Activated CD8-positive, alpha-beta memory T cell treated with anti-CD3 and anti-CD28 coated beads, Interleukin-2, amount 10 ng/mL, durations not matched to agents 7 days and 5 days (primary cell): ENCODE measurements at regions of chr12 and their contacts with region 1.

Region 1: DNA sequence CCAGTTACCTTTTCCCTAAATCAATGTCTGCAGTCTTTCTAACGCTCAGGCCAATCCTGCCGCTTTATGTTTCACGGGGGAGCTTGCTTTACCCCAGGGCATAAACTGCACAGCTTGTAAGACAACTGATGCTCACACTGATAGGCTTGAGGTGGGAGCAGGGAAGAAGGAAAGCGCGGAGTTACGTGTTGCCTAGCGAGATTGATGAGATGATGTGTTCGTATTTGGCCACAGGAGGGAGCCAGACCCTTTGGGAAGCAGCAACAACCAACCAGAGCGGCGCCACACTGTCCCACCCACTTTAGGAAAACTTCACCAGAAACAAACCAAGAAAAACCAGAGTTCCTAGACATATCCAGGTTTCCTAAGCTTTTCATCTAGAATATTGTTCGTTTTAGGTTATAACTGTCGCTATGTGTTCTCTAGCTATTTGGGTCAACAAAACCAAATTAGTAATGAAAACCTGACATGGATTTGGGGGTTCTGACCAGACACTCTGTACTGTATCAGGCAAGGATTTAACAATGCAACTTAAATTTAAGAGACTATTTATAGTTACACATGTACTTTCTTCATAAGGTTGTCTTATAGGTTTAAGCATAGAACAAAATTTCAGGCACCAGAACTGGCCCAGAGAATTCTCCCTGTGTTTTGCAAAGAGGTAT is 2.4 kb downstream of the IL26 start:
- DNase-seq: peak; percentile 83
- ATAC-seq: peak; percentile 99
- H3K4me3 Mint-ChIP-seq: peak overlapping the region; percentile 39
- H3K27ac Mint-ChIP-seq: peak overlapping the region; percentile 75
- H3K4me1 Mint-ChIP-seq: peaks cover 32% of the 10 kb centered on the region
- H3K27me3 Mint-ChIP-seq: peaks cover 17% of the 10 kb centered on the region

Region 2: DNA sequence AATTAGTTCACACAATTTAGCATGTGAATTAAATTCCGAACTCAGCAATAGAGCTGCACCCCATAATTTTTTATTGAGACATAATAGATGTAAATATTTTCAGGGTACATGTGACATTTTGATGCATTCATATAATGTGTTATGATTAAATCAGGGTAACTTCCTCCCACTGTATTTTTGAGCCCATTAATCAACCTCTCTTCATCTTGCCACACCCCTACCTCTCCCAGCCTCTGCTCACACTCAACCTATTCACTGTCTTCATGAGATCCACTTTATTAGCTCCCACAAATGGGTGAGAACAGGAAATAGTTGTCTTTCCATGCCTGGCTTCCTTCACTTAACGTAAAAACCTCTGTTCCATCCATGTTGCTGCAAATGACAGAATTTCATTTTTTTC is 12.3 kb before region 1 on chr12:
- CTCF ChIA-PET with region 1: interaction called, 13 read pairs
- DNase-seq: no peak
- ATAC-seq: no peak
- H3K4me3 Mint-ChIP-seq: no peak overlapping the region
- H3K27ac Mint-ChIP-seq: no peak overlapping the region
- H3K4me1 Mint-ChIP-seq: peaks cover 15% of the 10 kb centered on the region
- H3K27me3 Mint-ChIP-seq: peaks cover 28% of the 10 kb centered on the region

Region 3: GRCh38 chr12:68236421-68237059 is 13.3 kb after region 1 on chr12:
- CTCF ChIA-PET with region 1: interaction called, 20 read pairs
- DNase-seq: peak; percentile 66
- ATAC-seq: peak; percentile 70
- H3K4me3 Mint-ChIP-seq: peak overlapping the region; percentile 76
- H3K27ac Mint-ChIP-seq: peak overlapping the region; percentile 93
- H3K4me1 Mint-ChIP-seq: peaks cover 64% of the 10 kb centered on the region
- H3K27me3 Mint-ChIP-seq: no peaks in the 10 kb centered on the region

Region 4: DNA sequence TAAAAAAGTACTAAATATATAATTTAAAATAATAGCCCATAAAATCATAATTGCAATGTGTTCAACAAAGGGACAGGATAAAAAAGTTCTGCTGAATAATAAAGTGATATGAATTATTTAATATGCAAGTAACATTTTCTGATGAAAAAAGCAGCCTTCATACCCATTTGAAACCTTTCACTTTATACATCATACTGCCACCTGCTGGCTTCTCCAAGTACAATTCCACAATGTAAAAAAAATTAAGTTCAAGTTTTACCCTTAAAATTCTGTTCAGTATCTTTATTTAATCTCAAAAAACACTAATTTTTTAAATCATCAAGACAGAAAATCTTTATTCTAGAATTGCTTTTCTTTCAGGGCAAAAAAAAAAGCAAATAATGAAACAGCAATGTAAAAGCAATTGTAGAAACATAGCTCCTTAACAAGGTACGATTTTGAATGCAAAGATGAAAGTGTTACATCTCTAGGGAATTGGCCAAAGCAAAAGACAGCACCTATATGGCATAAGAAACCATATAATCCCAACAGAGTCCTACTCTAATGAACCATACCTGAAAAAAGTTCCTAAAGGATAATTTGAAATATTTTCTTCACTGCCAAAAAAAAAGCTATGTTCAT is 93.9 kb after region 1 on chr12:
- CTCF ChIA-PET with region 1: interaction called, 77 read pairs
- DNase-seq: peak; percentile 58
- ATAC-seq: no peak
- H3K4me3 Mint-ChIP-seq: no peak overlapping the region
- H3K27ac Mint-ChIP-seq: no peak overlapping the region
- H3K4me1 Mint-ChIP-seq: no peaks in the 10 kb centered on the region
- H3K27me3 Mint-ChIP-seq: no peaks in the 10 kb centered on the region

Region 5: GRCh38 chr12:68326716-68327115 is 103.5 kb after region 1 on chr12:
- CTCF ChIA-PET with region 1: interaction called, 55 read pairs
- DNase-seq: no peak
- ATAC-seq: no peak
- H3K4me3 Mint-ChIP-seq: no peak overlapping the region
- H3K27ac Mint-ChIP-seq: no peak overlapping the region
- H3K4me1 Mint-ChIP-seq: peaks cover 24% of the 10 kb centered on the region
- H3K27me3 Mint-ChIP-seq: no peaks in the 10 kb centered on the region